ENCODE measurements at regions of chr17 and their contacts with region 1.

Region 1: DNA sequence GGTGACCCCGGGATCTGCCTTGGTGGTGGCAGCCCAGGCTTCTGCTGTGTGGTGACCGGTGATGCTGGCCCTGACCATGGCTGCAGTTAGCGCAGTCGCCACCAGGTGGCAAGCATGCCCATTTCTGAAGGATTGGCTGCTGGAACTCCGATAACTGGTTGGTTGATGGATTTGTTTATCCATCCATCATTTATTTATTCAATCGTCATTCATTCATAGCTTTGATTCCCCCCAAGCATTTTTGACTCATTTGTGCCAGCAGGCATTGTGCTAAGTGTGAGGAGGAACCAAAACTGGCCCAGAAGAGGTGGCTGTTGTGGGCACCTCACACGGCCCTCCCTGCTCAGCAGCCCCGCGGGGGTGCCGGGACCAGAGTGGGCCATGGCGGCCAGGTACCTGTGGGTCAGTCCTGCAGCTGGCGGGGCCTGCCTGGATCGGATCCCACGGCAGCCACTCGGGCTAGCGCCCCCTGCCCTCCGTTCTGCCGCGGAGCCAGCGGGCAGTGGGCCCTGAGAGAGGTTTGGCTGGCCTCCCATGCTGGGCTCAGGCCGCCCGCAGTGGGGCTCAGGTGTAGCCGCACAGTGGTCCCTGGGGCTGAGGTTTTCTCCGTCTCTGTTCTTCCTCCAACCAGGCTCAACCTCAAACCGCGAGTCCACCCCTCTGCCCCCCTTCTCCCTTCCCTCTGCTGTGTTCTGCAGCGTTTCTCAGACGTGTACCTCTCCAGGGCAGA is 28.8 kb upstream of the ITGA3 start:
- DNase-seq: peak; percentile 75
- ATAC-seq: peak; percentile 74
- H3K4me3 ChIP-seq: peak overlapping the region; percentile 18
- H3K27ac ChIP-seq: peak overlapping the region; percentile 87
- H3K4me1 ChIP-seq: peaks cover 22% of the 10 kb centered on the region
- H3K27me3 ChIP-seq: no peaks in the 10 kb centered on the region
- CTCF ChIP-seq: peak; percentile 97
- POLR2A ChIP-seq: 0 out of 2 replicates have a peak, but pooled peaks have one; percentile 41
- RAD21 ChIP-seq: peak; percentile 95

Region 2: GRCh38 chr17:50055426-50056230 is 28.6 kb after region 1 on chr17 and contains the start of gene ITGA3:
- CTCF ChIA-PET with region 1: interaction called, 4 read pairs
- POLR2A ChIA-PET with region 1: interaction called, 5 read pairs
- dilution Hi-C with region 1: no loop called
- in situ Hi-C with region 1: no loop called
- intact Hi-C with region 1: loop called (anchors 1 kb)
- DNase-seq: peak; percentile 85
- ATAC-seq: peak; percentile 46
- H3K4me3 ChIP-seq: peak within 1 kb of the TSS; percentile 93
- H3K27ac ChIP-seq: peak within 1 kb of the TSS; percentile 57
- H3K4me1 ChIP-seq: peaks cover 53% of the 10 kb centered on the region
- H3K27me3 ChIP-seq: no peaks in the 10 kb centered on the region
- CTCF ChIP-seq: no peak
- POLR2A ChIP-seq: peak; percentile 73; the same call in 1 of the 2 replicates
- RAD21 ChIP-seq: no peak
- total RNA-seq, gene ITGA3: 78.0 and 80.0 TPM in 2 replicates

Region 3: DNA sequence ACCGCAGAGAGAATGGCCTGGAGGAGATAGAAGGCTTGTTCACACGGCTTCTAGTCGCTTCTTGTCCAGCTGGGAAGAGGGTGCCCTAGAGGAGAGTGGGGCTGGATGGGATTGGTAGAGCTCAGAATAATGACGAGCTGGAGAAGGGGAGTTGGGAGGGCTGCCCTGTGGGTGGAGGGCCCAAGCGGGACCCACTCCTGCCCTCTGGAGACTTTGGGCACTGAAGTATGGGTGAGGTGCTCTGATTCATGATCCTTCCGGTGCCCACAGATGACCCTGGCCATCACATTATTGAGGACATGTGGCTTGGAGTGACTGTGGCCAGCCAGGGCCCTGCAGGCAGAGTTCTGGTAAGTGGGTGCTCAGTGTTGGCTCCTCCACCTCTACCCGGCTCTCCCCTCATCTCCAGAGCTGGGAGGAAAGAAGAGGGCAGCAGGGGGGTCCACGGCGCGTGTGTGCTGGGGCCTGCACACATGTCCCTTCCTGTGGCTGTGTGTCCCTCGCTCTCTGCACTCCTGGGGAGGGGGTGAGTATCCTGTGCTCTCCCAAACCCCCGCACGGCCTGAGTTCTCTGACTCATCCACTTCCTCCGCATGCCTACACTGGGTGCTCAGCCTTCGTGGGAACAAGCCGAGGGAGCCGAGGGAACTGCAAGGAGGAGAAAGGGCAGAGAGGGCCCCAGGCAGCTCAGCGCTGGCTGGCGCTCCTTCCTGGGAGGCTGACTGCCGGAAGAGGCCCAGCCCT is 37.4 kb after region 1 on chr17:
- CTCF ChIA-PET with region 1: no interaction called
- POLR2A ChIA-PET with region 1: no interaction called
- dilution Hi-C with region 1: no loop called
- in situ Hi-C with region 1: no loop called
- intact Hi-C with region 1: loop called (anchors 2 kb)
- DNase-seq: peak; percentile 97
- ATAC-seq: peak; percentile 85
- H3K4me3 ChIP-seq: no peak overlapping the region
- H3K27ac ChIP-seq: peak overlapping the region; percentile 94
- H3K4me1 ChIP-seq: peaks cover 55% of the 10 kb centered on the region
- H3K27me3 ChIP-seq: no peaks in the 10 kb centered on the region
- CTCF ChIP-seq: no peak
- POLR2A ChIP-seq: 0 out of 2 replicates have a peak, but pooled peaks have one; percentile 42
- RAD21 ChIP-seq: peak; percentile 43

Measured in IMR-90 (cell line).